ENCODE measurements at regions of chr19 and their contacts with region 1.

Region 1: DNA sequence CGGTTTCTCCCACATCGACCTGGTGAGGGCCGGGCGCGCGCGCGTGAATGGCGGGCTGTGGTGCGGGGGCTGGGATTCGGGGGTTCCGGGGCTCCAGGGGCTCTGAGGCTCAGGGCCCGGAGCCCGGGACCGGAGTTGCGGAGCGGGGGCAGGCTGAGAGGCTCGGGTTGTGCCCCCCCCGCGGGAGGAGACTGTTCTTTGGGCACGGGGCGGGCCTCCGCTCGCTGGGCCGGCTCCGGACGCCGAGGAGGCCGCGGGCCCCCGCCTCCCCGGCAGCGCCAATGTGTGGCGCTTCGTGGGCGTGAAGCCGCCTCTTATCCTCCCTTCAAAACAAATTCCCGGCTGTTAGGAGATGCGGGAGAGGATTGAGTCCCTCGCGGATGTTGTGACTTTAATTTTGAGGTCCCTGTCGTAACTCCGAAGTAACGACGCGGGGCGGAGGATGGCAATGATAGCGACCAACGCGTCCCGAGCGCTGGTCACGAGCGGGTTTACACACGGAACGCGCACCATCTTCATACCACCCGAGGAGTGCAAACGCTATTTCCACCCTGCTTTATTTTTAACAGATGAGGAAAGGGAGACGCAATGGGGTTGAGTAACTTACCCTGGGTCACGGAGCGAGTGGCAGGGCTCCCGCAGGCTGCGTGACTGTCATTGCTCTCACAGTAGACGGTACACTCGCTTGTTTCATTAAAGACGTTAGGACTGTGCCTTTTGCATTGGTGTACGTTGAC is 536 bp downstream of the UBA2 start:
- DNase-seq: peak; percentile 63
- ATAC-seq: peak; percentile 28
- H3K4me3 Mint-ChIP-seq: peak overlapping the region; percentile 99
- H3K27ac Mint-ChIP-seq: peak overlapping the region; percentile 92
- H3K4me1 Mint-ChIP-seq: peaks cover 28% of the 10 kb centered on the region
- H3K27me3 Mint-ChIP-seq: no peaks in the 10 kb centered on the region

Region 2: GRCh38 chr19:34104096-34104495 is 324.6 kb before region 1 on chr19:
- CTCF ChIA-PET with region 1: no interaction called
- POLR2A ChIA-PET with region 1: no interaction called
- intact Hi-C with region 1: no loop called
- DNase-seq: no peak
- ATAC-seq: no peak
- H3K4me3 Mint-ChIP-seq: no peak overlapping the region
- H3K27ac Mint-ChIP-seq: no peak overlapping the region
- H3K4me1 Mint-ChIP-seq: no peaks in the 10 kb centered on the region
- H3K27me3 Mint-ChIP-seq: peaks cover 6% of the 10 kb centered on the region

Region 3: DNA sequence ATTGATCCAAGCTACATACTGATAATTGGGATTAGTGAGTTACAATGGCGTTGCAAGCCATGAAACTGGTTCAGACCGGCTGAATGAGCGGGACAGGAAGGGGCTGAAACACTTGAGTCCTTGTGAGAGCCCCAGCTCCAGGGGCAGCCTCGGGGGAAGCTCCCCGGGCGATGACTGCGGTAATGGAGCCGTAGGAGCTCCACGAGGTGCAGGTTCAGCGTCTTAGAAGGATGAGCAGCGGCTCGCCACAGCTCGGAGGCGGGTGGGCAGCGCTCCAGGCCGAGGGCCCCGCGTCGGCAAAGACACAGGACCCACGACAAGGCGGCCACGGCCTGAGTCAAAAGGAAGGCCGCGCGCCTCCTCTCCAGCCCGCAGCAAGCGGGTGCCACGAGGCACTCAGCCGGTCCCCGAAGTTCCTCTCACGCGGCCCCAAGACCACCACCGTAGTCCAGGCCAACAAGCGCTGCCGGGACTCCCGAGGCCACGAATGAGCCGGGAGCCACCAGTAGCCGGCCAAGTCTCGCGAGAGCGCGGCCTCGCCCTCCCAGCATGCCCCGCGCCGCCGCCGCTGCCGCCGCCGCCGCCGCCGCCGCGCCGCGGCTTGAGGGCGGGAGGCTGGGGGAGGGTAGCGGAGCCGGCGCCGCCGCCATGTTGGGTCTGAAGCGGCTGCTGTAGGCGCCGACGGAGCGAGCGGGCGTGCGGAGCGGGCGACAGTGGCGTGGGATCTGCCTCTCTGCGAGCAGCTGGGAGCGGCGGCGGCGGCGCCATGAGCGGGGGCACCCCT is 256.6 kb before region 1 on chr19 and contains the start of gene LSM14A:
- CTCF ChIA-PET with region 1: no interaction called
- POLR2A ChIA-PET with region 1: no interaction called
- intact Hi-C with region 1: loop called (anchors 1 to 10 kb)
- DNase-seq: peak; percentile 95
- ATAC-seq: peak; percentile 70
- H3K4me3 Mint-ChIP-seq: peak within 1 kb of the TSS; percentile 88
- H3K27ac Mint-ChIP-seq: peak within 1 kb of the TSS; percentile 99
- H3K4me1 Mint-ChIP-seq: peaks cover 36% of the 10 kb centered on the region
- H3K27me3 Mint-ChIP-seq: no peaks in the 10 kb centered on the region
- total RNA-seq, gene LSM14A: 89.0 to 151 TPM

Region 4: GRCh38 chr19:34359140-34359953 is 69.4 kb before region 1 on chr19:
- CTCF ChIA-PET with region 1: interaction called, 4 read pairs
- POLR2A ChIA-PET with region 1: no interaction called
- intact Hi-C with region 1: loop called in 1 of 2 experiments (anchors 1 kb)
- DNase-seq: peak; percentile 100
- ATAC-seq: peak; percentile 93
- H3K4me3 Mint-ChIP-seq: peak overlapping the region; percentile 77
- H3K27ac Mint-ChIP-seq: peak overlapping the region; percentile 89
- H3K4me1 Mint-ChIP-seq: peaks cover 43% of the 10 kb centered on the region
- H3K27me3 Mint-ChIP-seq: no peaks in the 10 kb centered on the region

Region 5: DNA sequence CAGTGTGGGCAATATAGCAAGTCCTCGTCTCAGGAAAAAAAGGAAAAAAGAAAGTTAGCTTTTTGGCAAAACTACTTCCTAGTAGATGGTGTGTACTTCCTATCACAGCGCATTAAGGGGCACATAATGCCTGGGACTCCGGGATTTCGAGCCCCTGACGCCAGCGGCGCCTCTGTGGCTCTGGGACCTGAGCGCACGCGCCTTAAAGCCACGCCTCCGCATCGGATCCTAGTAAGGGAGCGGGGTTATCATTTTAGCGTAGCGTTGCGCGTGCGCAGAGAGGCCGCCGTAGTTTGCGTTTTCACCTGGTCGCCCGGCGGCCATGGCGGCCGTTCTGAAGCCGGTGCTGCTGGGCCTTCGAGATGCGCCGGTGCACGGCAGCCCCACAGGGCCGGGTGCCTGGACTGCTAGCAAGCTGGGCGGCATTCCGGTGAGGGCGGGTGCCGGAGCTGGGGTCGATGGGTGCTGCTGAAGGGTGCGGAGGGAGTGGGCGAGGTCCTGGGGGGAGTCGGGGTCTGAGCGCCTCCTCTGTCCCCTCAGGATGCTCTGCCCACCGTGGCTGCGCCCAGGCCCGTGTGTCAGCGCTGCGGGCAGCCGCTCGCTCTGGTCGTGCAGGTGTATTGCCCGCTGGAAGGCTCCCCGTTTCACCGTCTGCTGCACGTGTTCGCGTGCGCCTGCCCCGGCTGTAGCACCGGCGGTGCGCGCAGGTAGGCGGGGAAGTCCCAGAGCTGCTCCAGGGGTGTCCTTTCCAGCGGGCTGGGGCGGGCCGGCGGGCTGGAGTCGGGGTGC is 24.4 kb before region 1 on chr19 and contains the start of gene PDCD2L:
- CTCF ChIA-PET with region 1: interaction called, 10 read pairs
- POLR2A ChIA-PET with region 1: interaction called, 3 read pairs
- intact Hi-C with region 1: loop called (anchors 1 kb)
- DNase-seq: peak; percentile 97
- ATAC-seq: peak; percentile 95
- H3K4me3 Mint-ChIP-seq: peak within 1 kb of the TSS; percentile 83
- H3K27ac Mint-ChIP-seq: peak within 1 kb of the TSS; percentile 80
- H3K4me1 Mint-ChIP-seq: peaks cover 23% of the 10 kb centered on the region
- H3K27me3 Mint-ChIP-seq: no peaks in the 10 kb centered on the region
- total RNA-seq, gene PDCD2L: 31.0 to 35.2 TPM

Region 6: DNA sequence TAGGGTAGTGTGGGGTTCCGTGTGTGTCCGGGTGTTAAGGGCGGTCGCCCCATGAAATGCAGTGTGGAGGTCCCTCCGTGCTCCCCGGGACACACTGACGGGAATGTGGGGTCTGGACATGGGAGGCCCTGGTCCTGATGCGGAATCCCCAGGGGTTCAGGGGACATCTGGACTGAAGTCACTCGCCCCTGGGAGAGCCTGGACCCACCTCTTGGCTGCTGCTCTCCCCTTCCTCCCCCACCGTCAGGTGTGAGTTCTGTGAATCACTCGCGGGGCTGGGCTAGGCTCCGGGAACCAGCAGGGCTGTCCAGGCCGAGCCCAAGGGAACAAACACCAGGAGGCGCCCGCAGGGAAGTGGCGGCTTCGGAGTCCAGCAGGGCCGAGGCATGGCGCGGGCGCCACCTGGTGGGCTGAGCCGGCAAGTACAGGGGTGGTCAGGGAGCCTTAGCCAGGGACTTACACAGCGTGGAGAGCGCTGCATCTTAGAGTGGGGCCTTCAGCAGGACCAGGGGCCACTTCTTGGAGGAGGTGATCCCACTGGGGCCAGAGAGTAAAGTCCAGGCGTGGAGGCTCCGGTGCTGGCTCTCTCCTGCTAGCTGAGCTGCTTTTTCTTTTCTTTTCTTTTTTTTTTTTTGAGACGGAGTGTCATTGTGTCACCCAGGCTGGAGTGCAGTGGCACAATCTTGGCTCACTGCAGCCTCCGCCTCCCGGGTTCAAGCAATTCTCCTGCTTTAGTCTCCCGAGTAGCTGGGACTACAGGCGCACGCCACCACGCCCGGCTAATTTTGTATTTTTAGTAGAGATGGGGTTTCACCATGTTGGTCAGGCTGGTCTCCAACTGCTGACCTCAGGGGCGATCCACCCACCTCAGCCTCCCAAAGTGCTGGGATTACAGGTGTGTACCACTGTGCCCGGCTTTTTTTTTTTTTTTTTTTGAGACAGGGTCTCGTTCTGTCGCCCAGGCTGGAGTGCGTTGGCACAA is 72.9 kb after region 1 on chr19:
- CTCF ChIA-PET with region 1: no interaction called
- POLR2A ChIA-PET with region 1: no interaction called
- intact Hi-C with region 1: loop called in 1 of 2 experiments (anchors 1 kb)
- DNase-seq: peak; percentile 94
- ATAC-seq: peak; percentile 95
- H3K4me3 Mint-ChIP-seq: no peak overlapping the region
- H3K27ac Mint-ChIP-seq: no peak overlapping the region
- H3K4me1 Mint-ChIP-seq: peaks cover 6% of the 10 kb centered on the region
- H3K27me3 Mint-ChIP-seq: peaks cover 10% of the 10 kb centered on the region

Region 7: GRCh38 chr19:34512254-34512822 is 83.6 kb after region 1 on chr19:
- CTCF ChIA-PET with region 1: no interaction called
- POLR2A ChIA-PET with region 1: no interaction called
- intact Hi-C with region 1: no loop called
- DNase-seq: no peak
- ATAC-seq: no peak
- H3K4me3 Mint-ChIP-seq: no peak overlapping the region
- H3K27ac Mint-ChIP-seq: no peak overlapping the region
- H3K4me1 Mint-ChIP-seq: no peaks in the 10 kb centered on the region
- H3K27me3 Mint-ChIP-seq: peaks cover 14% of the 10 kb centered on the region

Region 8: DNA sequence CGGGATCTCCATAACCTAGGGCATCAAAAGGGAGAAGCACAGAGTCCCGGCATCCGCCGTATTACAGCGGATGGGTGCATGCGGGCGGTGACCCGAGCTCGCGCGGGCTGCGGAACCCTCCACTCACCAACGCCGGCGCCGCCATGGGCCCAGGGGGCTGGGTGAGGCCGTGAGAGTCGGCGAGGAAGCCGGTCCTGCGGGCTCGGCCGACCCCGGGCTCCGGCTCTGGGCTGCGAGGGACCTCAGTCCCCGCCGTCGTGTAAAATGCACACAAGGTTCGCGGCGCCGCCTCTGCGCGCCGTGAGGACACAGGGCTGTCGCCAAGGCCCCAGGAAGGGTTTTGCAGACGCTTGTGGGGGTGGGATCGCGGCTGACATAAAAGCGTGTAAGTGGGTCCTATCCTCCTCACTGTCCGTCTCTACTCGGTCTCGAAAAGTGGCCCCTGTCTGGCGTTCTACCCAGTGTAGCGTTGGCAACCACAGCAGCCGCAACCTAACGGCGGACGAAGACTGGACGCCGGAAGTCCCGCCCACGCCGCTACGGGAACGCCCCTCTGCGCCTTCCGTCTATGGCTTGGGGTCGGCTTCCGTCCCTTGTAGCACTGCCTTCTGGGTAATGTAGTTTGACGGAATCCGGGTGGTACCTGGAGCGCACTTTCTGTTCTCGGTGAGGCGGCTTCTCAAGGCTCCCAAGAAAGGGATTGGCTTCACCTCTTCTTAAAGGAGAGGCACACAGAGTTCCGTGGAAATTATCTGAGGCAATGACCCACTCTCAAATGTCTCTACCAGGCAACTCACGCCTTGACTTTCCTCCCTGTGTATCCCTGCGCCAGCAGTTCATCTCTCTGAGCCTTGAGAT is 344.2 kb after region 1 on chr19 and contains the start of gene ZNF599:
- CTCF ChIA-PET with region 1: no interaction called
- POLR2A ChIA-PET with region 1: no interaction called
- intact Hi-C with region 1: loop called in 1 of 2 experiments (anchors 1 kb)
- DNase-seq: peak; percentile 94
- ATAC-seq: peak; percentile 97
- H3K4me3 Mint-ChIP-seq: peak within 1 kb of the TSS; percentile 83
- H3K27ac Mint-ChIP-seq: peak within 1 kb of the TSS; percentile 86
- H3K4me1 Mint-ChIP-seq: peaks cover 11% of the 10 kb centered on the region
- H3K27me3 Mint-ChIP-seq: peaks cover 9% of the 10 kb centered on the region
- total RNA-seq, gene ZNF599: 3.5 to 3.7 TPM

Measured in activated CD4-positive, alpha-beta T cell treated with anti-CD3 and anti-CD28 coated beads for 36 hours (primary cell).